Posterior vena cava (tissue), 2 donors: ENCODE measurements at regions of chr4 and their contacts with region 1.

Region 1: GRCh38 chr4:28776008-28776407 is 1915.4 kb downstream of the STIM2 start:
- DNase-seq: no peak

Region 2: DNA sequence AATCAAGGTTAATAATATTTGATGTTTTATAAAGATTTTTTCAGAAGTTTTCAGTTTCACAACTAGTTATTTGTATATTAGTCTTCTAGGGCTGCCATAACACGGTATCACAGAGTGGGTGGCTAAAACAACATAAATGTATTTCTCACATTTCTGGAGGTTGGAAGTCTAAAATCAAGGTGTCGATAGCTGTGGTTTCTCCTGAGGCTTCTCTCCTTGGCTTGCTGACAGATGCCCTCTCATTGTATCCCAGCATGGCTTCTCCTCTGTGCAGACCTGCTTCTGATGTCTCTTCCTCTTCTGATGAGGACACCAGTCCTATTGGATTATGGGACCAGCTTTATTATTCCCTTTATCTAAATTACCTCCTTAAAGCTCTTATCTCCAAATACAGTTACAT is 458.8 kb before region 1 on chr4:
- intact Hi-C with region 1: loop called in 1 of 2 experiments (anchors 5 kb)
- DNase-seq: no peak

Region 3: DNA sequence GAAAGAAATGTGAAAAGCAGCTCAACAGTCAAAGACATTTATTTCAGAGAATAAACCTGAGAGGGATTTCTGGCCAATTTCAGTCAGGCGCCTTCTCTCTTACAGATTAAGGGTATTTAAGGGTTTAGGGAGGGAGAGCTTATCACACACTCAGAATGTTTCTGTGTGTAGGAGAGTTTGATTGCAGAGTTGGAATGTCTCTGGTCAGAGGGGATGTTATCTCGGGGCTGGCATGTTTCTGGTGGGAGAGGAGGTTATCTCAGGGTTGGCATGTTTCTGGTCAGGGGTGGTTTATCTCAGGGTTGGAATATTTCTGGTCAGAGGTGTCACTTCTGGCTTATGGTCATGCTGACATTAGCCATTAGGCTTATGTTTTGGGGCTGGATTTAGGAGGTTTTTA is 23.7 kb after region 1 on chr4:
- intact Hi-C with region 1: no loop called
- DNase-seq: no peak

Region 4: GRCh38 chr4:28879178-28879577 is 103.2 kb after region 1 on chr4:
- intact Hi-C with region 1: no loop called
- DNase-seq: no peak

Region 5: GRCh38 chr4:28890949-28891775 is 115.2 kb after region 1 on chr4:
- intact Hi-C with region 1: no loop called
- DNase-seq: no peak